ENCODE measurements at regions of chr15 and their contacts with region 1.

Region 1: GRCh38 chr15:74781431-74782258 is at the start of gene CSK:
- DNase-seq: peak; percentile 93
- ATAC-seq: peak; percentile 52
- H3K4me3 Mint-ChIP-seq: peak within 1 kb of the TSS; percentile 97
- H3K27ac Mint-ChIP-seq: peak within 1 kb of the TSS; percentile 99
- H3K4me1 Mint-ChIP-seq: peaks cover 59% of the 10 kb centered on the region
- H3K27me3 Mint-ChIP-seq: no peaks in the 10 kb centered on the region
- total RNA-seq, gene CSK: 269 to 281 TPM

Region 2: GRCh38 chr15:74770211-74770892 is 11.3 kb before region 1 on chr15:
- POLR2A ChIA-PET with region 1: interaction called, 709 read pairs
- DNase-seq: no peak
- ATAC-seq: no peak
- H3K4me3 Mint-ChIP-seq: no peak overlapping the region
- H3K27ac Mint-ChIP-seq: no peak overlapping the region
- H3K4me1 Mint-ChIP-seq: peaks cover 17% of the 10 kb centered on the region
- H3K27me3 Mint-ChIP-seq: no peaks in the 10 kb centered on the region

Region 3: DNA sequence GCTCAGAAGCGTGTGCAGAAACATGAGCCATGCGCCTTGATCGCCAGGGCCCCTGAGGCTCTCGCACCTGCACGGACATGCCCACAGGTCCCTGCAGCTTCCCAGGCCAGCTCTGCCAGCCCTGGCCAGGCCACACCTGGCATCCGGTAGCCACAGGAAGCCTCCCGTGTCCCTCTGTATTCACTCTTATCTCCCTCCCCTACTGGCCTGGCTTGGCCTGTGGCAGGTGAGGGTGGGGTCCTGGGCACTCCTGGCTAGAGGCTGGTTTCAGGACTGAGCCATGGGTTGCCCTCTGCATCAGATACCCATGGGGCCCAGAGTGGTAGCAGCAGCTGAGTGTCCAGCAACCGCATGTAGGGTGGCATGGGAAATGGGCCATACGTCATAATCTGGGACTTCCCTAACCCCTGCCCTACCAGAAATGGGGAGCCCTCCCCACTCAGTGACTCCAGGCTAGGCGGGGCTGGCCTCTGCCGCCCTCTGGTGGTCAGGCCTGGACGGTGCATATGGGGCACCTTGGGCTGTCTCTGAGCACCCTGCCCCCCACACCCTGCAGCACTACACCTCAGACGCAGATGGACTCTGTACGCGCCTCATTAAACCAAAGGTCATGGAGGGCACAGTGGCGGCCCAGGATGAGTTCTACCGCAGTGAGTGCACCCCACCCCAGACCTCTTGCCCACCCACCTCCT is 18.4 kb after region 1 on chr15:
- POLR2A ChIA-PET with region 1: interaction called, 709 read pairs
- DNase-seq: peak; percentile 92
- ATAC-seq: peak; percentile 80
- H3K4me3 Mint-ChIP-seq: no peak overlapping the region
- H3K27ac Mint-ChIP-seq: peak overlapping the region; percentile 76
- H3K4me1 Mint-ChIP-seq: peaks cover 33% of the 10 kb centered on the region
- H3K27me3 Mint-ChIP-seq: no peaks in the 10 kb centered on the region

Region 4: DNA sequence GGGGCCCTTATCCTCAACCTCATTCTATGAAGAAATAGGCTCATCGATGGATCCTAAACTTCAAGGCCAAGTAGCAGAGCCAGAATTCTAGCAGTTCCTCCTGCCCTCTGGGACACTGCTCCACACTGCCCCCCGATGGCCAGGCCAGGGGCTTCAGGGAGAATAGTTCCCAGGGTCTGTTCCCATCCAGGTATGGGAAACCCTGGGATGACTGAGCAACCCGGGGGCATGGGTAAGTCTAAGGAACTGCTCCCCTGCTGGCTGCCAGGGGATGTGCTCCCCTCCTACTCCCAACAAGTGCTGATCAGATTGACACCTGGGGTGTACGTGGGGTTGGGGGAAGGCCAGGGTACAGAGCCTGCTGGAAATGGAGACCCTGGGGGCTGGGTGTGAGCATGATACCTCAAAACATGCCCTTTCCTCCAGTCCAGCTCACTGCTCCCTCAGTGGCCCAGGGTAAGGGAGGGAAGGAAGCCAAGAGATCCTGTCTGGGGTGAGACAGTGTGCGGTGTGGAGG is 53.7 kb after region 1 on chr15:
- POLR2A ChIA-PET with region 1: no interaction called
- DNase-seq: peak; percentile 67
- ATAC-seq: peak; percentile 52
- H3K4me3 Mint-ChIP-seq: no peak overlapping the region
- H3K27ac Mint-ChIP-seq: no peak overlapping the region
- H3K4me1 Mint-ChIP-seq: no peaks in the 10 kb centered on the region
- H3K27me3 Mint-ChIP-seq: no peaks in the 10 kb centered on the region

Measured in activated naive CD8-positive, alpha-beta T cell treated with anti-CD3 and anti-CD28 coated beads, Interleukin-2, amount 10 ng/mL, durations not matched to agents 7 days and 5 days (primary cell).